ENCODE measurements at regions of chr4 and their contacts with region 1.

Region 1: GRCh38 chr4:177128306-177128705 is 181.4 kb upstream of the NEIL3 start:
- DNase-seq: peak; percentile 90
- ATAC-seq: peak; percentile 60
- H3K4me3 ChIP-seq: no peak overlapping the region; the same call in 1 of the 2 replicates
- H3K27ac ChIP-seq: peak overlapping the region; percentile 50
- H3K4me1 ChIP-seq: peaks cover 18% of the 10 kb centered on the region
- H3K27me3 ChIP-seq: no peaks in the 10 kb centered on the region
- CTCF ChIP-seq: no peak

Region 2: GRCh38 chr4:175351473-175351872 is 1776.8 kb before region 1 on chr4:
- CTCF ChIA-PET with region 1: no interaction called
- POLR2A ChIA-PET with region 1: no interaction called
- intact Hi-C with region 1: loop called (anchors 10 kb)
- DNase-seq: no peak
- ATAC-seq: no peak
- H3K4me3 ChIP-seq: no peak overlapping the region
- H3K27ac ChIP-seq: no peak overlapping the region
- H3K4me1 ChIP-seq: peaks cover 5% of the 10 kb centered on the region
- H3K27me3 ChIP-seq: no peaks in the 10 kb centered on the region
- CTCF ChIP-seq: no peak